ENCODE measurements at regions of chr5 and their contacts with region 1.

Region 1: GRCh38 chr5:151239237-151239861 is 13.6 kb upstream of the GM2A start:
- DNase-seq: peak; percentile 58 to 89 (median 79)
- H3K4me3 ChIP-seq: peak overlapping the region in 1 of 4 donors; percentile 33
- H3K27ac ChIP-seq: no peak overlapping the region
- H3K4me1 ChIP-seq: peaks cover 11 to 13% of the 10 kb centered on the region in 2 donors
- H3K27me3 ChIP-seq: no peaks in the 10 kb centered on the region
- CTCF ChIP-seq: peak; percentile 65 to 94 (median 68)
- POLR2A ChIP-seq: no peak

Region 2: DNA sequence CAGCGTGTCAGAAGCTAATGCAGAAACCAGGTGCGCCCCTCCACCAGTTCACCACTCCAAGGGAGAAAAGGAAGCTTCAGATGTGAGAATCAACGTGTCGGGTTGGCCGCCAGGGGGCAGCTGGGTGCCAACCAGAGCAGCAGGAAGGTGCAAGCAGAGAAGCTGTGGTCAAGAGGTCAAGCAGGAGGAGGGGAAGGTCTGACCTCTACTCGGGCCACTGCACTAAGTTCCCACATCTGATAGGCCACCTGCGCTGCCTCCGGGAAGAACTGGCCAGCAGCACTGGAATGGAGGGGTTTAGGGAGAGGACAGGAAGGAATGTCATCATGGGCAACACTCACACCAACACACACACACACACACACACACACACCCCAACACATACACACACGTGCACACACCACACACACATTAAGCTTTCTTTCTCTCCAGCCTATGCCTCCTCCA is 113.1 kb before region 1 on chr5:
- intact Hi-C with region 1: loop called in 1 of 2 experiments (anchors 10 kb)
- DNase-seq: peak; percentile 67 to 87 (median 79)
- H3K4me3 ChIP-seq: no peak overlapping the region
- H3K27ac ChIP-seq: no peak overlapping the region
- H3K4me1 ChIP-seq: peaks cover 0 to 8% of the 10 kb centered on the region in 2 donors
- H3K27me3 ChIP-seq: no peaks in the 10 kb centered on the region
- CTCF ChIP-seq: peak; percentile 54 to 91 (median 80)
- POLR2A ChIP-seq: no peak

Region 3: DNA sequence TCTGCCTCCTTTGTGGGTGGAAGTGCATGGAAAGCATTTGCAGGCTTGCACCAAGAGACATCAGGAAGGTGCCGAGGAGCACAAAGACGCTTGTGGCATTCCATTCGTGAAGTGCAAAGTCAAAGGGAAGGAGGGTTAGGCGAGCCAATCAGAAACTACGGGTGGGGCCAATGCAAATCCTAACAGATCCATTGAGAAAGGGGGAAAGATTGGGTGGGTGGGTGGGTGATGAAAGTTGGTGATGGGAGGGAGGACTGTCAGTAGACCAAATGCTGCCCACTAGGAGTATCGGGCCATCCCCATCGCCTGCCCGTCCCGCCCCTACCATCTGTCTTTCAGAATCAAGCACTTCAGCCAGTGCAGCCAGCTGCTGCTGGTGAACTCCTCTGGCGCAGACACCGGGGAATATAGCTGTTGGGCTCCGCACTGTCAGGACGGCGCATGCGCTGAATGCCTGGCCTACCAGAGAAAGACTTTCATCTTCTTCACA is 64.7 kb before region 1 on chr5:
- intact Hi-C with region 1: loop called (anchors 5 to 10 kb)
- DNase-seq: peak in 6 of 7 donors; percentile 30 to 76 (median 52)
- H3K4me3 ChIP-seq: no peak overlapping the region
- H3K27ac ChIP-seq: peak overlapping the region in 1 of 5 donors; percentile 31
- H3K4me1 ChIP-seq: no peaks in the 10 kb centered on the region
- H3K27me3 ChIP-seq: no peaks in the 10 kb centered on the region
- CTCF ChIP-seq: no peak
- POLR2A ChIP-seq: no peak

Measured in adrenal gland (tissue), 19 donors.